ENCODE measurements at regions of chr1 and their contacts with region 1.

Region 1: GRCh38 chr1:63148825-63149645 is 173.3 kb upstream of the FOXD3 start:
- DNase-seq: peak; percentile 19
- H3K4me3 Mint-ChIP-seq: no peak overlapping the region
- H3K27ac Mint-ChIP-seq: no peak overlapping the region
- H3K4me1 Mint-ChIP-seq: no peaks in the 10 kb centered on the region
- H3K27me3 Mint-ChIP-seq: peaks cover 20% of the 10 kb centered on the region

Region 2: GRCh38 chr1:62841587-62842169 is 307.4 kb before region 1 on chr1:
- CTCF ChIA-PET with region 1: interaction called, 8 read pairs
- intact Hi-C with region 1: loop called (anchors 2 kb)
- DNase-seq: peak; percentile 7
- H3K4me3 Mint-ChIP-seq: no peak overlapping the region
- H3K27ac Mint-ChIP-seq: no peak overlapping the region
- H3K4me1 Mint-ChIP-seq: no peaks in the 10 kb centered on the region
- H3K27me3 Mint-ChIP-seq: no peaks in the 10 kb centered on the region

Region 3: DNA sequence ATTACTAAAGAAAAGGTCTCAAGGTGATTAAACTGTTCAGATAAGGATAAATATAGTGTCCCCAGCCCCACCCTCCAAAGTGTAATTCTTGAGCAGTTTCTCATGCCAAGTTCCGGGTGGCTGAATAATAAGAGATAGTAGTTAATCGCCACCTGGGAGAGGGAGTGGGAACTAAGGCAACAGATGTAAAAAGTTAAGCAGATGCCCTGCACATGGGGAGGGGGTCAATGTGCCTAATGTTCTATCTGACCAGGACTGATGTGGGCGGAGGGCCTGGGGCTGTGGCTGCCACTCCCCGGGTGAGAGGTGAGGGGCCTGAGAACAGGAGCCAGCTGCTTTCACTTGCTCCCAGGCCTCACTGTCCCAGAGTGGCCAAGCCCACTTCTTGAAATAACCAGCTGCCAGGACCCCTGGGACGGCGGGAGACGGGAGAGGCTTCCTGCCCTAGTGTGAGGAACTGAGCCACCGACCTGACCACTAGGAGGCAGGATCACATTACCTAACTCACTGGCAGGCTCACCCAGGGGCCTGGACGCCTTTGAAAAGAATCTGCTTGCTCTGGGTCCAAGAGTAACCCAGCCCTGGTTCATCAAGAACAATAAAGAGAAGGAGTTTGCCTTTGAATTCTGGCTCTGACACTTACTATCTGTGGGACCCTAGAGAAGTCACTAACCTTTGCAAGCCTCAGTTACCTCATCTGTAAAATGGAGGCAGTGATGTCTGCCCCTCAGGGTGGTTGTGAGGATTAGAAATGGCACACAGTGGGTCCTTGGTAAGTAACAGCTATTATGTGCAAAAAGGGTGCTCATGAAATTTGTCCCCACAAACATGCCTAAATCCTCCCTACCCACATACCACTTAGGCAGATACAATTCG is 185.9 kb before region 1 on chr1:
- CTCF ChIA-PET with region 1: no interaction called
- intact Hi-C with region 1: loop called (anchors 1 kb)
- DNase-seq: peak; percentile 49
- H3K4me3 Mint-ChIP-seq: no peak overlapping the region
- H3K27ac Mint-ChIP-seq: no peak overlapping the region
- H3K4me1 Mint-ChIP-seq: no peaks in the 10 kb centered on the region
- H3K27me3 Mint-ChIP-seq: peaks cover 16% of the 10 kb centered on the region

Region 4: GRCh38 chr1:63327417-63328139 is 178.5 kb after region 1 on chr1:
- CTCF ChIA-PET with region 1: no interaction called
- intact Hi-C with region 1: no loop called
- DNase-seq: peak; percentile 74
- H3K4me3 Mint-ChIP-seq: no peak overlapping the region
- H3K27ac Mint-ChIP-seq: no peak overlapping the region
- H3K4me1 Mint-ChIP-seq: peaks cover 26% of the 10 kb centered on the region
- H3K27me3 Mint-ChIP-seq: peaks cover 68% of the 10 kb centered on the region

Measured in activated naive CD4-positive, alpha-beta T cell treated with anti-CD3 and anti-CD28 coated beads for 36 hours (primary cell).